Right ventricle myocardium superior (tissue), 1 donor: ENCODE measurements at regions of chr10 and their contacts with region 1.

Region 1: DNA sequence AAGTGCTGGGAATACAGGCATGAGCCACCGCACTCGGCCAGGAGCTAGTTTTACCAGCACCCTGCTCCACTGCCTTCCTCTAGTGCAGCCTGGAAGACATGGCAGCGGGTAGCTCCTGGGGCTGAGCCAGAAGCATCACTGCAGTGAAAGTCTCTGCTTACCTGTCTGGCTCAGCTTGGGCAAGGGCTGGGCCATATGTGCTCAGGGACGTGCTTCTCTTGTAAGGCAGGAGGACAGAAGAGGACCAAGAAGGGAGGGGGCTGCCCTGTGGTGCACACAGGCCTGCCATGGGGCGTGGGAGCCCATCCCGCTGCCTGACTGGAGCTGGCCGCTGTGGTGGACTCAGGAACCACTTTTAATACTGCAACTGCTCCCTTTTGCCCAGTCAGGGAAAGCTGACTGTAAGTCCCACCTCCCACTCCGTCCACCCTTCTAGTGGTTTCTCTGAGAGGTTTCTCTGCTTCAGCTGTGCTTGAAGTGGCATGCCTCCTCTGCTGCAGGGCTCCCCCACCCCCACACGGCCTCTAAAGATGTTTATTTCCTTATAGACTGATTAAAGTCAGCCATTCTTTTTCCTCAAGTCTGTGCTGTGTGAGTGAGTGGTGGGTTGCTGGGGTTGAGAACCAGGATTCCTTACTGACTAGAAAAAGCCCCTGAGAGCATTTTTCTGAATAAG is 25.3 kb upstream of the C10orf95 start:
- DNase-seq: no peak
- ATAC-seq: no peak

Region 2: DNA sequence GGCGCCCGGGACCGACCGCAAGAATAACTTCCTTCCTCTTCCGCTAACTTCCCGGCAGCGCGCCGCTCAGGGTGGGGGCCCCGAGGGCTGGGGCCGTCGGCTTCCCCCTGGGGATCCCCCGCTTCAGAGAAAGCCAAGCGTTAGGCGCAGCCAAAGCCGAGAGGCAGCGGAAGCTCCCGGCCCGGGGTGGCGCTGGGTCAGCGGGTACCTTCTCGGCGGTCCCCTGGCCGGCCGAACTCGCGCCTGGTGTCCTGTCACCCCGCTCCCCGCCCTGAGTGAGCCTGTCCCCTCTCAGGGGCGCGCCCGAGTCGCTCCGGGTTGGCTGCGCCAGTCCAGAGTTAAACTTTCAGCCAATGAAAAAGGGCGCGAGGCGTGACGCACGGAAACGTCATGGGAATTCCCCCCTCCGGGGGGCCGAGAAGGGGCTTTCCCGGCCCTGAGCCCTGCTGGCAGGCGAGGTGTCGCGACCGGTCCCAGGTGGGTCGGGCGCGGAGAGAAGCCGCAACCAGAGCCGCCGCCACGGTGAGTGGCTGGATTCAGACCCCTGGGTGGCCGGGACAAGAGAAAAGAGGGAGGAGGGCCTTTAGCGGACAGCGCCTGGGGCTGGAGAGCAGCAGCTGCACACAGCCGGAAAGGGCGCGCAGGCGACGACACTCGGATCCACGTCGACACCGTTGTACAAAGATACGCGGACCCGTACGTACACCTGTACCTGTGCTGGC is 82.4 kb before region 1 on chr10:
- intact Hi-C with region 1: loop called (anchors 10 kb)
- DNase-seq: peak; percentile 97
- ATAC-seq: peak; percentile 95